ENCODE measurements at regions of chr12 and their contacts with region 1.

Region 1: DNA sequence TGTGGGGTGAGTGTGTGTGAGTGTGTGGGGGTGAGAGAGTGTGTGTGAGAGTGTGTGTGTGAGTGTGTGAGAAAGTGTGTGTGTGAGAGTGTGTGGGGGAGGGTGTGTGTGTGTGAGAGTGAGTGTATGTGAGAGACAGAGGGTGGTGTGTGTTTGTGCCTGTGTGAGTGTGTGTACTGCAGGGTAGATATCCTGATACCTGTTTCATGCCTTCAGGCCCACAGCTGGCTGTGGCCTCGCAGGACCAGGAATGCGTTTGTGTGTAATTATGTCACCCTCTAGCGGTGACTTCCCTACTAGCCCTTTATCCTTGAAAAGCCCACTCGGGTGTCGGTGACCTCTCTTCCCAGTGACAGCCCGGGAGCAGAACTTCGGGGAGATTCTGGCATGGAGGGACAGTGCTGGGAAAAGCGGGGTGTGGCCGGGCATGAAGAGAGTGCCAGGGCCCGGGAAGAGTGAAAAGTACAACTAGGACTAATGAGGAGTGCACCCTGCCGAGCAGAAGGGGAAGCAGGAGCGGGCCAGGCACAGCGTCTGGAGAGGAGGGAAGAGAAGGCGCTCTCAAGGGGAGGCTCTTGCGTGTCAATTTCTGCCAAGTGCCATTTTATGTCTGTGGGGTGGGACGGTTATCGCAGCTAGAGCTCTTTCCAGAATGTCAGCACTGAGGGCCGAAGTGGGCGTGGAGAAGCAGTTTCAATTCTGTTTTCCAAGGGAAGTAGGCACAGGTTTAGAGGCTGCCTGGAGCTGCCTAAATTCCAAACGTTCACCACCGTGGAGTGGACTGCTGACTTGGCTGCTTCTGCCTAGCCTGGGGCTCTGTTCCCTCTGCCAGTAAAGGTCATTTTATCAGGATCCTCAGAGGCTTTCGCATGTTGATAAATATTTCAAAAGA is 11.0 kb upstream of the FBXL14 start:
- DNase-seq: peak; percentile 79

Region 2: DNA sequence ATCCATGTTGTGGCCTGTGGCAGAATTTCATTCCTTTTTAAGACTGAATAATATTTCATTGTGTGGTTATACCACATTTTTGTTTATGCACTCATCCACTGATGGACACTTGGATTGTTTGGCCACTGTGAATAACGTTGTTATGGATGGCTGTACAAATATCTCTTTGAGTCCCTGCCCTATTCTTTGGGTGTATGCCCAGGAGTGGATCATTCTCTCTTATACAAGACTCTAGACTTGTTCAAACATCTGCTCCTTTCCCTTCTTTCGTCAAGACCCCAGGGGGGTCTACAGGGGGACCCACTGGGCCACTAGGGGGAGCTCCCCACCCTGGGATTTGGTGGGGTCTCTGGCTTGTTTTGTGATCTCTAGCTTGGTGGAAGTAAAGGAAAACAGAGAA is 88.4 kb before region 1 on chr12:
- CTCF ChIA-PET with region 1: interaction called, 10 read pairs
- POLR2A ChIA-PET with region 1: no interaction called
- DNase-seq: peak; percentile 34

Region 3: GRCh38 chr12:1544996-1545700 is 60.2 kb before region 1 on chr12:
- CTCF ChIA-PET with region 1: no interaction called
- POLR2A ChIA-PET with region 1: no interaction called
- DNase-seq: no peak

Region 4: DNA sequence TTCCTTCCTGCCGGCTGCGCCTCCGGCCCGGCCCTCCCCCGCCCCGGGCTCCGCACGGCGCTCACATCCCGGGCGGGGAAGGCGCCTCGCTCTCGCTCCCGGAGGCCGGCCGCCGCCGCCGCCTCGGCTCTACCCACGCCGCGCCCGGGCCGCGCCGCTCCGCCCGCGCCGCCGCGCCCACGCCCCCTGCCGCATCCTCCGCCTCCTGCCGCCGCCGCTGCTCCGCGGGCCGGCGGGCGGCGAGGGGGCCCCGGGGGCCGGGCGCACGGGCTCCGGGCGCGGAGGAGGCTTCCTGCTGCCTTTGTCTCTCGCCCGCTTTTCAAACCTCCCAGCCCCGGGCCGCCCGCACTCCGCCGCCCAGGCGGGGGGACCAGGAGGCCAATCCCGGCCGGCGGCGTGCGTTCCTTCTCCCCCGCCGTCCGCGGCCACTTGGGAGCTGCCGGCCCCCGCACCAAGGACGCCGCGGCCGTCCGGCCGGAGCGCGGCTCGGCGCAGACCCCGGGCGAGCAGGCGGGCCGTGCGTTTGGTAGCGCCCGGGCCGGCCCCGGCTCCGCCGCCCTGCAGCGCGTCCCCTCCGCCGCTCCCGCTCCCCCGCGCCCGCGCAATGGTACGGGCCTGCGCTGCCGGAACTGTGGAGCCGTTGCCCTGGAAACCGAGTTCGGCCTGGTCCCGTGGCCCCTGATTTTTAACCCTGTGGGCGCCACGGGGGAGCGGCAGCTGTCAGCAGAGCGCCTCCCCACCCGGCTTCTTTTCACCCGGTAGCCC is 10.9 kb before region 1 on chr12 and contains the start of gene FBXL14:
- CTCF ChIA-PET with region 1: interaction called, 8 read pairs
- POLR2A ChIA-PET with region 1: interaction called, 11 read pairs
- DNase-seq: peak; percentile 81

Measured in HEK293T (cell line).